ENCODE measurements at regions of chr9 and their contacts with region 1.

Region 1: DNA sequence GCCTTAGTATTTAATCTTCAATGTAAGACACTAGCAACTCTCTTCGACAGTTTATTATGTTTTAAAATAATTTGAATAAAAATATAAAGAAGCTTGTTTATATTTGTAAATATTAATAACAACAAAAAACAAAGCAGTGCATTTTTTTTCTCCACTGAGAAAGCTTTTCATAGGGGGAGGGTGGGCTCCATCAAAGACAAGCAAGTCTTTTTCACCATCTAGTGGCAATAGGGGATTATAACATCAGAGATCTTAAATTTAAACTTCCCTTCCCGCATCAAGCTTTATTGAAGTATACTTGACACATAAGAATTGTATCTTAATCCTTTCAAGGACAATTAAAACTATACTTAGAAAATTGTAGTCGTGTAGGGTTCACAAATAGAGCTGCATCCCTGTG is 9.3 kb upstream of the OR13F1 start:
- DNase-seq: peak; percentile 51
- H3K27ac ChIP-seq: no peak overlapping the region
- CTCF ChIP-seq: peak; percentile 55

Region 2: DNA sequence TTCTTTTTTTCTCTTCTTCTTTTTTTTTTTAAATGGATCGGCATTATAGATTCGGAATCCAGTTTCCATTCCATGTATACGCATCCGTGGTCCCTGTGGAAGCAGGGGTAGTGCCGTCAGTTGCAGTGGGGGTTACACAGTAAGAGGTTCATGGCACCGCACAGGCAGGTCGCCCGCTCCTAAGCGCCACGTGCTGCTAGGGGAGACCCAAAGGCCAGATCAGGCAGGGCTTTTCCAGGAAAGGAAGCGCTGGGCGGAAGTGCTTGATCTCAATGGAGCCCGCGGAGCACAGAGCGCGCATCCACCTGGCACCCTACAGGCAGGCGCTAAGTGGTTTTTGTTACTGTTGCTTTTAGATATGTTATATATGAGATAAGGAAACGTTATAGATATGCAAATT is 165.6 kb before region 1 on chr9:
- CTCF ChIA-PET with region 1: no interaction called
- POLR2A ChIA-PET with region 1: no interaction called
- DNase-seq: no peak
- H3K27ac ChIP-seq: no peak overlapping the region
- CTCF ChIP-seq: no peak

Region 3: DNA sequence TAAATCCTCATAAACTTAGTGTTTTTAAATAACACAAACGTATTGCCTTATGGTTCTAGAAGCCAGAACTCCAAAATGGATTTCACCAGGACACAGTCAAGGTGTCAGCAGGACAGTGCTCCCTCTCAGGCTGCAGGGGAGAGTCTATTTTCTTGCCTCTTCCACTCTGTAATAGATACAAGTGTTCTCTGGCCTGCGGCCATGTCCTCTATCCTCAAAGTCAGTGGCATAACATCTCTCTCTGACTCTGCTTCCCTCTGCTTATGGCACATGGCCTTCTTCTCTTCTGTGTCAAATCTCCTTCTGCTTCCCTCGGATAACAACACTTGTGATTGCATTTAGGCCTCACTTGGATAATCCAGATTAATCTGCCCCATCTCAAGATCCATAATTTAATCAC is 120.1 kb before region 1 on chr9:
- CTCF ChIA-PET with region 1: no interaction called
- POLR2A ChIA-PET with region 1: interaction called, 11 read pairs
- DNase-seq: no peak
- H3K27ac ChIP-seq: no peak overlapping the region
- CTCF ChIP-seq: no peak

Region 4: DNA sequence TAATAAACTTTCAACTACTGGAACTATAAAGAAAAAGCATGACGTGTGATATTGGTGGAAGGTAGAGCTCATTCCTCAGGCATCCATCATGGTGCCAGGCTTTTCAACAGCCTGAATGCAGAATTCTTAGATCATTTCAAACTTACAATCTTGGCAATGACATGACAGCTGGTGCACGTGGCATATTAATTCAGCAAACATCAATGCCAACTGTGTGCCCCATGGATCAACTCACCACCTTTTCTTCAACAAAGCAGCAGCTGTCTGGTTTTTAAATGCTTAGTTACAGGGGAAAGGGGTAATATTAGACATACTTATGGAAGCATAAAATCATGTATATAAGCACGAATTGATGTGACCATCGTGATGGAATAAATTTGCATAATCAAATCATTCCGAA is 46.8 kb before region 1 on chr9:
- CTCF ChIA-PET with region 1: no interaction called
- POLR2A ChIA-PET with region 1: no interaction called
- DNase-seq: no peak
- H3K27ac ChIP-seq: no peak overlapping the region
- CTCF ChIP-seq: no peak

Region 5: DNA sequence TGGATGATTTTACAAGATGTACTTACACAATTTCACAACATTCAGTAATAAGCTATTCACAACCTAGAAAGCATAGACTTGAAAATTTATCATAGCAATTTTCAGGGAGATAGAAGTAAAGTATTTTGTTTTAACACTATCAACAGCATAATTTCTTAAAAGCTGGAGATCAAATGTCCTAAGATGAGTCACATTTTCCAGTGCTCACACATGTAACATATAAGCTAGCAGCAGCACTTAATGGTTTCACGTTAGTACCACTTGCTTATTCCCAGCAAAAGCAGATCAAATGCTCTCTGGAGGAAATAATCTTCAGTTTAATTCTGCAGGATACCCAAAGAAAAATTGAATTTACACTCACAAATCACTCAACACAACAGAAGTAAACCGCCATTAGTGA is 80.6 kb after region 1 on chr9:
- CTCF ChIA-PET with region 1: no interaction called
- POLR2A ChIA-PET with region 1: no interaction called
- DNase-seq: no peak
- H3K27ac ChIP-seq: no peak overlapping the region
- CTCF ChIP-seq: no peak